Endothelial cell of umbilical vein (primary cell): ENCODE measurements at regions of chr9 and their contacts with region 1.

Region 1: GRCh38 chr9:113238859-113239232 is 17.5 kb downstream of the SLC31A1 start:
- DNase-seq: no peak
- H3K4me3 ChIP-seq: no peak overlapping the region
- H3K27ac ChIP-seq: no peak overlapping the region
- H3K4me1 ChIP-seq: peaks cover under 1% of the 10 kb centered on the region
- H3K27me3 ChIP-seq: no peaks in the 10 kb centered on the region
- CTCF ChIP-seq: no peak
- POLR2A ChIP-seq: no peak

Region 2: DNA sequence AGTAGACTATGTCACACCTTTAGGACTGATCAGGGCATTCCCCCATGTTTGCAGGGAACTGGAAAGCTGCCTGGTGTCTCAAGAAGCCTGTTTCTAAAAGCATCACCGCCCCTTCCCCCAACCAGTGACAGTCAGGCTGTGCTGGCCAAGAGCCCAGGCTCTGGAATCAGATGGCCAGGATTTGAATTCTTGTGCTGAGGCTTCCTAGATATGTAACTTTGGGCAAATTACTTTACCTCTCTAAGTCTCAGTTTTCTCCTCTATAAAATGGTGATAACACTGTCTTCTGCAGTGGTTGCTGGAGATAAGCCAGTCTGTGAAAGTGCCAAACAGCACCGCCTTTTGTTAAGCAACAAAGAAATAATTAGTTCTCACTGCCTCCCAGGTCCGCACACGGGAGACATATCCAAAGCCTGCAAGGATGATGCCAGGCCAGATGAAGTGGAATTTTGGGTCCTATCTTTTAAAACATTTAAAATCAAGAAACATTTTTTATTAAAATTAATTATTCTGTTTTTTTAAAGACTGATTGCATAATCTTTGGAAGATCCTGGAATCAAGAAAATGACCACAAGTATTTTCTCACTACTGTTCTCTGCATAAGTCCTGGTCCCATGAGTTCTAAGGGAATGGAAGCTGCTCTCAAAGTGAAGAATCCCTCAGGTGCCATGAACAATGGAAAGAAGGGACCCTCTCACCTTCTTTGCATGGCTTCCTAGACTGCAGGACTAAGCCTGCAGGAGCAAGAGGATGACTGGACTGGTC is 74.1 kb before region 1 on chr9:
- CTCF ChIA-PET with region 1: no interaction called
- POLR2A ChIA-PET with region 1: no interaction called
- dilution Hi-C with region 1: no loop called
- intact Hi-C with region 1: no loop called
- DNase-seq: no peak
- H3K4me3 ChIP-seq: no peak overlapping the region
- H3K27ac ChIP-seq: no peak overlapping the region
- H3K4me1 ChIP-seq: no peaks in the 10 kb centered on the region
- H3K27me3 ChIP-seq: no peaks in the 10 kb centered on the region
- CTCF ChIP-seq: no peak
- POLR2A ChIP-seq: no peak

Region 3: GRCh38 chr9:113261917-113262671 is 23.2 kb after region 1 on chr9:
- CTCF ChIA-PET with region 1: interaction called, 4 read pairs
- POLR2A ChIA-PET with region 1: interaction called, 11 read pairs
- dilution Hi-C with region 1: no loop called
- intact Hi-C with region 1: no loop called
- DNase-seq: no peak
- H3K4me3 ChIP-seq: no peak overlapping the region
- H3K27ac ChIP-seq: no peak overlapping the region
- H3K4me1 ChIP-seq: no peaks in the 10 kb centered on the region
- H3K27me3 ChIP-seq: no peaks in the 10 kb centered on the region
- CTCF ChIP-seq: no peak
- POLR2A ChIP-seq: no peak